Activated naive CD4-positive, alpha-beta T cell treated with anti-CD3 and anti-CD28 coated beads for 36 hours (primary cell): ENCODE measurements at regions of chr19 and their contacts with region 1.

Region 1: GRCh38 chr19:48468775-48469288 is 337 bp upstream of the CYTH2 start:
- DNase-seq: peak; percentile 100
- H3K4me3 Mint-ChIP-seq: peak overlapping the region; percentile 84
- H3K27ac Mint-ChIP-seq: peak overlapping the region; percentile 85
- H3K4me1 Mint-ChIP-seq: peaks cover 21% of the 10 kb centered on the region
- H3K27me3 Mint-ChIP-seq: no peaks in the 10 kb centered on the region

Region 2: GRCh38 chr19:48170038-48170812 is 298.6 kb before region 1 on chr19 and contains the starts of genes LIG1 and ZSWIM9:
- CTCF ChIA-PET with region 1: no interaction called
- intact Hi-C with region 1: loop called (anchors 2 kb)
- DNase-seq: peak; percentile 93
- H3K4me3 Mint-ChIP-seq: peak within 1 kb of the TSS; percentile 90
- H3K27ac Mint-ChIP-seq: peak within 1 kb of the TSS; percentile 97
- H3K4me1 Mint-ChIP-seq: peaks cover 30% of the 10 kb centered on the region
- H3K27me3 Mint-ChIP-seq: no peaks in the 10 kb centered on the region
- total RNA-seq, gene LIG1: 187 to 195 TPM
- total RNA-seq, gene ZSWIM9: 6.1 to 6.7 TPM

Region 3: DNA sequence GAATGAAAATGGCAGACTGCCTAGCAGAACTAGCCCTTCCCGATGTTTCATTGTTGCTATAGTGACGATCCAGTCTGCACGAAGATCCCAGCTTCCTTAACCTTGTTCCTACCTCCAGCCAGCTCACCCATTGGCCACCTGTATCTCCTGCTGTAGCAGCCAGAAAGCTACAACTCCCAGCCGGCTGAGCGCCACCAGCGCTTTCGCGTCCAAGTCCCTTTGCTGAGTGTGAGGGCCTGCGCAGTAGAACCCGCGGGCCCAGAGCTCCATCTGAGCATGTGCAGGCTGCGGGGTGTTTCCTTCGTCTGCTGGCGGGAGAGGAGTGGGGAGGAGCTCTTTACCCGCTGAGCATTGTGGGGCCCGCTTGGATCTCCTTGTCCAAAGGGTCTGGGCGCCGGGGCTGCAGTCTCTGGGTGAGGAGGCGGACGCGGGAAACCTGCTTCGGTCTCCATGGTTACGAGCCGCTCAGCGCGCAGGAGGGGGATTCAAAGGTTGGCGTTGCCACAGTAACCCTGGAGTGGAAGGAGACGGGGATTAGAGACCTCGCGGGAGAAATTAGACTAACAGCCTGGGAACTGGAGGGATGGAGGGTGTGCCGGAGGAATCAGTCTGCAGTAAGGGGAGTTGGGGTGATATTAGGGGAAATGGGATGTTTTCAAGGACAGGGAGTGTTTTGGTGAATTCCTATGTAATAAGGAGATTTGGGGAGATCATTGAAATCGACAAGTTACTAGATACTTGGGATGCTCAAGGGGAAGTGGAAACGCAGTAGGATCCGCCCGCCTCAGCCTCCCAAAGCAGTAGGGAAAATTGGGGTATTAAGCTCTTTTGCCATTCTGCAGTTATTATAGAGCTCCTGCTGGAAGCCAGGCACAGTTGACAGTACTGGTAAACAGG is 264.9 kb before region 1 on chr19:
- CTCF ChIA-PET with region 1: no interaction called
- intact Hi-C with region 1: no loop called
- DNase-seq: peak; percentile 96
- H3K4me3 Mint-ChIP-seq: no peak overlapping the region
- H3K27ac Mint-ChIP-seq: no peak overlapping the region
- H3K4me1 Mint-ChIP-seq: peaks cover 21% of the 10 kb centered on the region
- H3K27me3 Mint-ChIP-seq: no peaks in the 10 kb centered on the region

Region 4: GRCh38 chr19:48321622-48322591 is 146.9 kb before region 1 on chr19:
- CTCF ChIA-PET with region 1: no interaction called
- intact Hi-C with region 1: loop called (anchors 1 kb)
- DNase-seq: peak; percentile 99
- H3K4me3 Mint-ChIP-seq: peak overlapping the region; percentile 92
- H3K27ac Mint-ChIP-seq: peak overlapping the region; percentile 99
- H3K4me1 Mint-ChIP-seq: peaks cover 57% of the 10 kb centered on the region
- H3K27me3 Mint-ChIP-seq: no peaks in the 10 kb centered on the region

Region 5: DNA sequence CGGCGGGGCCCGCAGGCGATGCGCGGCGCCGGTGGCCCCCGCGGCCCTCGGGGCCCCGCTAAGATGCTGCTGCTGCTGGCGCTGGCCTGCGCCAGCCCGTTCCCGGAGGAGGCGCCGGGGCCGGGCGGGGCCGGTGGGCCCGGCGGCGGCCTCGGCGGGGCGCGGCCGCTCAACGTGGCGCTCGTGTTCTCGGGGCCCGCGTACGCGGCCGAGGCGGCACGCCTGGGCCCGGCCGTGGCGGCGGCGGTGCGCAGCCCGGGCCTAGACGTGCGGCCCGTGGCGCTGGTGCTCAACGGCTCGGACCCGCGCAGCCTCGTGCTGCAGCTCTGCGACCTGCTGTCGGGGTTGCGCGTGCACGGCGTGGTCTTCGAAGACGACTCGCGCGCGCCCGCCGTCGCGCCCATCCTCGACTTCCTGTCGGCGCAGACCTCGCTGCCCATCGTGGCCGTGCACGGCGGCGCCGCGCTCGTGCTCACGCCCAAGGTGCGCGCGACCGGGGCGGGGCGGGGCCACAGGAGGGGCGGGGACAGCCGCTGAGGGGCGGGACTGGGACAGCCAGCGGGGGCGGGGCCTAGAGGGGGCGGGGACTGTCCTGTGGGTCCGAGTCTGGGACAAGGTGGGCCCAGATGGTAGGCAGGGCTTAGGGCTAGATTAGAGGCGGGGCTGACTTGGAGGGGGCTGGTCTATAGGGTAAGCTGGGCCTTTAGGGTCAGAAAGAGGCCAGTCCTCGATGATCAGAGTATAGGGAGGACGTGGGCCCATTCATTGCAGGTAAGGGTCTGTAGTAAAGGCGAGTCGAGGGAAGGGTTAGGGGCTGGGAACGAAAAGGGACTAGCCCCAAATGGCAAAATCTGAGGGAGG is 70.2 kb before region 1 on chr19:
- CTCF ChIA-PET with region 1: no interaction called
- intact Hi-C with region 1: loop called (anchors 2 kb)
- DNase-seq: peak; percentile 86
- H3K4me3 Mint-ChIP-seq: peak overlapping the region; percentile 48
- H3K27ac Mint-ChIP-seq: no peak overlapping the region
- H3K4me1 Mint-ChIP-seq: peaks cover 41% of the 10 kb centered on the region
- H3K27me3 Mint-ChIP-seq: peaks cover 41% of the 10 kb centered on the region

Region 6: DNA sequence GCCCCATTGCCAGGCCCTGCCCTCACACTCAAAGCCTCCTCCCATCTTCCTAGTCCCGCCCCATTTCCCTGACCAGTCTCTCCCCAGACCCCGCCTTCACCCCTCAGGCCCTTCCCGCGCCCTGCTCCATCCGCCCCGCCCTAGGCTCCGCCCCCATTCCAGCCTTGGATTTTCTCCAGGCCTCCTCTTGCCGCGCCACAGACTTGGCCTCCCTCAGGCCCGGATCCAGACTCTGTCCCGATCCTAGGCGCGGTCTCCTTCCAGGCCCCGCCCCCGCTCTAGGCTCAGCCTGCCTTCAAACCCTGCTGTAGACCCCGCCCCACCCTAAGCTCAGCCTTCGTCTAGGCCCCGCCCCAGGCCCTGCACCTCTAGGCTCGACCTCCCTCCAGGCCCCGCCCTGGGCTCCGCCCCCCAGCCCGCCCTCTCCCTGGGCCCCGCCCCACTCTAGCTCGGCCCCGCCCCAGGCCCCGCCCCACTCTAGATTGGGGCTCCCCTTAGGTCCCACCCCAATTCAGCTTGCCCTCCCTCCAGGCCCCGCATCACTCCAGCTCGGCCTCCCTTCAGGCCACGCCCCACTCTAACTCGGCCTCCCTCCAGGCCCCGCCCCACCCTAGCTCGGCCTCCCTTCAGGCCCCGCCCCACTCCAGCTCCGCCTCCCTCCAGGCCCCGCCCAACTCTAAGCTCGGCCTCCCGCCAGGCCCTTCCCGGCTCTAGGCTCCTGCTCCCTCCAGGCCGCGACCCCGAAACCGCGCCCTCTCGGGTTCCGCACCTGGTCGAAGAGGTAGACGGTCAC is 24.3 kb after region 1 on chr19:
- CTCF ChIA-PET with region 1: interaction called, 11 read pairs
- intact Hi-C with region 1: loop called (anchors 1 kb)
- DNase-seq: peak; percentile 86
- H3K4me3 Mint-ChIP-seq: peak overlapping the region; percentile 62
- H3K27ac Mint-ChIP-seq: no peak overlapping the region
- H3K4me1 Mint-ChIP-seq: peaks cover 31% of the 10 kb centered on the region
- H3K27me3 Mint-ChIP-seq: peaks cover 38% of the 10 kb centered on the region

Region 7: DNA sequence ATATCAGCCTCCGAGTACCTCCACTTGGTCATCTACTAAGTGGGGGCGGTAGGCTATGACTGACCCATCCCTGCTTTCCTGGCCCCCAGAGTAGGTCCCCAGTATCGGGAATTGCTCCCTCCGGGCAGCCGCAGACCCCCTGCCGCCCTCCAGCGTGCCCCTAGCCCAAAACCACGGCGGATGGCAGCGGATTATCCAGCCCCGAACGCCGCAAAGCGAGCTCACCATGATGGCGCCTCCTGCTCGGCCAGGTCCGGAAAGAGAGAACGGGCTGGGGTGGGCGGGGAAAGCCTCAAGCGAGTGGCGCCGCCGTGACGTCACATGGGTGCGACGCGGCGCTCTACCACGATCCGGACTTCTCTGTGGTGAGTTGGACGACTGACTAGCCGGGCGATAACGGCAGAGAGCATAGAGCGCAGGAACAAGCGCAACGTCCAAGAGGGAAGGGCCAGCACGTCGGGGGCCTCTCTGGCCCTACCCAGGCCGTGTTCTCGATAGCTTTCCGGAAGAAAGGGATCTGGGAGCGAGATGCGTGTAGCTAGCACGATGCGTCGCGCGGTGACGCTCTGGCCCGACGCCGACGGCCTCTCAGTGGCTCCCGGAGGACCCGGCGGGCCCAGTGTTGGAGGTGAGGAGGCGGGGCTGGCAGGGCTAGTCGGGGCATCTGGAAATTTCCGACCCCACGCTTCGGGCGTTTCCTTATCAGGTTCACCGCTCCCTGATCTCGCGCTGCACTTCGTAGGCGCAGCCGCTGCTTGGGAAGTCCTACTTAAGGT is 150.3 kb after region 1 on chr19 and contains the starts of genes RPL18 and SPHK2:
- CTCF ChIA-PET with region 1: no interaction called
- intact Hi-C with region 1: loop called (anchors 1 kb)
- DNase-seq: peak; percentile 95
- H3K4me3 Mint-ChIP-seq: peak within 1 kb of the TSS; percentile 99
- H3K27ac Mint-ChIP-seq: peak within 1 kb of the TSS; percentile 99
- H3K4me1 Mint-ChIP-seq: peaks cover 53% of the 10 kb centered on the region
- H3K27me3 Mint-ChIP-seq: no peaks in the 10 kb centered on the region
- total RNA-seq, gene RPL18: 2,373 to 2,473 TPM
- total RNA-seq, gene SPHK2: 20.1 to 20.6 TPM